A549 (cell line): ENCODE measurements at regions of chr9 and their contacts with region 1.

Region 1: GRCh38 chr9:115591584-115591984 is 473.6 kb upstream of the TNC start:
- DNase-seq: peak; percentile 83 to 97
- ATAC-seq: peak; percentile 89 to 92
- H3K4me3 ChIP-seq: no peak overlapping the region
- H3K27ac ChIP-seq: peak overlapping the region; percentile 89 to 93
- H3K4me1 ChIP-seq: peaks cover 65% of the 10 kb centered on the region
- CTCF ChIP-seq: peak; percentile 95
- EP300 ChIP-seq: peak in 1 of 2 experiments; percentile 74; a peak in 2 of 5 replicates
- POLR2A ChIP-seq: no peak
- RAD21 ChIP-seq: peak; percentile 97 to 99

Region 2: GRCh38 chr9:115615821-115616665 is 24.5 kb after region 1 on chr9:
- CTCF ChIA-PET with region 1: interaction called, 18 read pairs
- POLR2A ChIA-PET with region 1: no interaction called
- DNase-seq: peak; percentile 79 to 82
- ATAC-seq: peak; percentile 98 to 99
- H3K4me3 ChIP-seq: no peak overlapping the region
- H3K27ac ChIP-seq: peak overlapping the region; percentile 84 to 90
- H3K4me1 ChIP-seq: peaks cover 32% of the 10 kb centered on the region
- CTCF ChIP-seq: no peak
- EP300 ChIP-seq: peak; percentile 81 to 89; a peak in 3 of 5 replicates
- POLR2A ChIP-seq: no peak
- RAD21 ChIP-seq: peak; percentile 34 to 35; a peak in 3 of 5 replicates

Region 3: GRCh38 chr9:115635680-115636383 is 44.2 kb after region 1 on chr9:
- CTCF ChIA-PET with region 1: no interaction called
- POLR2A ChIA-PET with region 1: no interaction called
- DNase-seq: no peak
- ATAC-seq: no peak
- H3K4me3 ChIP-seq: no peak overlapping the region
- H3K27ac ChIP-seq: no peak overlapping the region
- H3K4me1 ChIP-seq: no peaks in the 10 kb centered on the region
- CTCF ChIP-seq: no peak
- EP300 ChIP-seq: no peak
- POLR2A ChIP-seq: no peak
- RAD21 ChIP-seq: no peak

Region 4: GRCh38 chr9:115883457-115884329 is 292.1 kb after region 1 on chr9:
- CTCF ChIA-PET with region 1: interaction called, 23 read pairs
- POLR2A ChIA-PET with region 1: no interaction called
- DNase-seq: peak; percentile 60 to 88
- ATAC-seq: peak; percentile 90 to 97
- H3K4me3 ChIP-seq: no peak overlapping the region
- H3K27ac ChIP-seq: peak overlapping the region; percentile 76 to 93
- H3K4me1 ChIP-seq: peaks cover 21% of the 10 kb centered on the region
- CTCF ChIP-seq: peak; percentile 78
- EP300 ChIP-seq: no peak
- POLR2A ChIP-seq: no peak
- RAD21 ChIP-seq: peak; percentile 95 to 98

Region 5: GRCh38 chr9:115944166-115944948 is 352.8 kb after region 1 on chr9:
- CTCF ChIA-PET with region 1: interaction called, 19 read pairs
- POLR2A ChIA-PET with region 1: interaction called, 17 read pairs
- DNase-seq: peak; percentile 88 to 100
- ATAC-seq: peak; percentile 96 to 97
- H3K4me3 ChIP-seq: no peak overlapping the region
- H3K27ac ChIP-seq: peak overlapping the region; percentile 95 to 99
- H3K4me1 ChIP-seq: peaks cover 59% of the 10 kb centered on the region
- CTCF ChIP-seq: no peak
- EP300 ChIP-seq: peak; percentile 100
- POLR2A ChIP-seq: no peak
- RAD21 ChIP-seq: peak; percentile 52 to 92

Region 6: GRCh38 chr9:116149844-116150243 is 558.3 kb after region 1 on chr9:
- CTCF ChIA-PET with region 1: interaction called, 58 read pairs
- POLR2A ChIA-PET with region 1: interaction called, 40 read pairs
- DNase-seq: peak in 1 of 2 experiments; percentile 76
- ATAC-seq: peak in 1 of 2 experiments; percentile 14; a peak in 2 of 6 replicates
- H3K4me3 ChIP-seq: no peak overlapping the region
- H3K27ac ChIP-seq: peak overlapping the region; percentile 87 to 99
- H3K4me1 ChIP-seq: peaks cover 55% of the 10 kb centered on the region
- CTCF ChIP-seq: peak; percentile 46; the same call in 2 of the 3 replicates
- EP300 ChIP-seq: no peak
- POLR2A ChIP-seq: no peak
- RAD21 ChIP-seq: peak; percentile 41 to 51

Region 7: DNA sequence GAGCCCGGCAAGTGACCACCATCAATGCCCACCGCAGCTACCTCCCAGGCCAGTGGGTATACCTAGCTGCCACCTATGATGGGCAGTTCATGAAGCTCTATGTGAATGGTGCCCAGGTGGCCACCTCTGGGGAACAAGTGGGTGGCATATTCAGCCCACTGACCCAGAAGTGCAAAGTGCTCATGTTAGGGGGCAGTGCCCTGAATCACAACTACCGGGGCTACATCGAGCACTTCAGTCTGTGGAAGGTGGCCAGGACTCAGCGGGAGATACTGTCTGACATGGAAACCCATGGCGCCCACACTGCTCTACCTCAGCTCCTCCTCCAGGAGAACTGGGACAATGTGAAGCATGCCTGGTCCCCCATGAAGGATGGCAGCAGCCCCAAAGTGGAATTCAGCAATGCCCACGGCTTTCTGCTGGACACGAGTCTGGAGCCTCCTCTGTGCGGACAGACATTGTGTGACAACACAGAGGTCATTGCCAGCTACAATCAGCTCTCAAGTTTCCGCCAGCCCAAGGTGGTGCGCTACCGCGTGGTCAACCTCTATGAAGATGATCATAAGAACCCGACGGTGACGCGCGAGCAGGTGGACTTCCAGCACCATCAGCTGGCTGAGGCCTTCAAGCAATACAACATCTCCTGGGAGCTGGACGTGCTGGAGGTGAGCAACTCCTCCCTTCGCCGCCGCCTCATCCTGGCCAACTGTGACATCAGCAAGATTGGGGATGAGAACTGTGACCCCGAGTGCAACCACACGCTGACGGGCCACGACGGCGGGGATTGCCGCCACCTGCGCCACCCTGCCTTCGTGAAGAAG is 595.9 kb after region 1 on chr9:
- CTCF ChIA-PET with region 1: interaction called, 15 read pairs
- POLR2A ChIA-PET with region 1: no interaction called
- DNase-seq: no peak
- ATAC-seq: no peak
- H3K4me3 ChIP-seq: no peak overlapping the region
- H3K27ac ChIP-seq: peak overlapping the region in 1 of 2 experiments; percentile 37; a peak in 2 of 6 replicates
- H3K4me1 ChIP-seq: peaks cover 73% of the 10 kb centered on the region
- CTCF ChIP-seq: no peak
- EP300 ChIP-seq: no peak
- POLR2A ChIP-seq: no peak
- RAD21 ChIP-seq: no peak

Region 8: DNA sequence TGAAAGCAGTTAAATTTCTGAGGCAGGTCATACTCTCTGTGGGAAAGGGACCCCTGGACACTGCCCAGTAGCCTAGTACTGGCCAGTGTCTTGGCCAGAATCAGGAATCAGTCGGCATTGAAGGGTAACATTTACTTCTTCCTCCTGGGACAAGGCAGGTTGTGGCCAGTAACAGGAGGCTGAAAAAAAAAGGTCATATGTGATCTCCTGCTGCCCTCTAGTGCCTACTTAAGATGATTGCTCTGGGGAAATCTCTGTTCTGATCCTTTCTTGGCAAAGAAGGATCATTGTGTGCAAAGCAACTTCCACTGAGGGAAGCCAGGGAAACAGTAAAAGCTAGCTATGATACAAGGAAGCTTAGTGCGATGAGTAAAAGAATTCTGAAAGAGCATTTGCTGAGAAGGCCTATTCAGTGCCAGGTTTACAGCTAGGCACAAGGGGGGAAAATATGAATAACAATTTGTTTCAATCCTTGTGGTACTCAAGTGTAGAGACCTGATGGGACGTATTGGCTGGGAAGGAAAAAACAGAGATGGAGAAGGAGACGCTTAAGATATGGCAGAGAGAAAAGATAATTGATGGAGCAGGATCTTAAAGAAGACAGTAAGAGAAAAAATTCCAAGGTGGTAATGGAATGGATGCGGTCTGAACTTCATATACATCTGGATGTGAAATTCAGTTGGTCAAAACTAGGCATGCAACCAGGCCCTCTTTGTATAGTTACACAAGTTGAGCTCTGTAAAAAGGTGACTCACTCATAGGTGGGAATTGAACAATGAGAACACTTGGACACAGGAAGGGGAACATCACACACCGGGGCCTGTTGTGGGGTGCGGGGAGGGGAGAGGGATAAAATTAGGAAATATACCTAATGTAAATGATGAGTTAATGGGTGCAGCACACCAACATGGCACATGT is 1069.7 kb after region 1 on chr9:
- CTCF ChIA-PET with region 1: interaction called, 13 read pairs
- POLR2A ChIA-PET with region 1: no interaction called
- DNase-seq: peak; percentile 74 to 81
- ATAC-seq: peak; percentile 96 to 99
- H3K4me3 ChIP-seq: no peak overlapping the region
- H3K27ac ChIP-seq: peak overlapping the region; percentile 47 to 66; a peak in 5 of 6 replicates
- H3K4me1 ChIP-seq: peaks cover 19% of the 10 kb centered on the region
- CTCF ChIP-seq: peak; percentile 89
- EP300 ChIP-seq: no peak
- POLR2A ChIP-seq: no peak
- RAD21 ChIP-seq: peak; percentile 91 to 94